GM10248 (cell line): ENCODE measurements at regions of chr4 and their contacts with region 1.

Region 1: GRCh38 chr4:108030332-108030731 is 40.6 kb downstream of the HADH start:
- DNase-seq: peak; percentile 76
- CTCF ChIP-seq: peak; percentile 84

Region 2: DNA sequence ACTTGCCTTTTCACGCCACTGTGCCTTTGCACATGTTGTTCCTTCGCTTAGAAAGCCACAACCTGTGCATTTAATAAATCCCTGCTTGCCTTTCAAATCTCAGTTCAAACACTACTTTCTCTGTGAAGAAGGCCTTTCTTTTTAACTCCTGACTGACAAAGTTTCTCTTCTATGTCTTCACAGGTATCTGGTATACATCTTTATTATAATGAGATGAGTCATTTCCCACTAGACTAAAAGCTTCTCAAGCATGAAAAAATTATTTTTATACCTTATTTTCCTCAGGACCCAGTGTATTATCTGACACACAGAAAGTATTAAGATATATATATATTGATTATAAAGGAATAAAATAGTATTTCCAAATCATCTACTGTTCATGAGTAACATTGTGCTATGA is 1904.3 kb before region 1 on chr4:
- CTCF ChIA-PET with region 1: no interaction called
- POLR2A ChIA-PET with region 1: no interaction called
- DNase-seq: no peak
- CTCF ChIP-seq: no peak

Region 3: GRCh38 chr4:108018040-108018883 is 12.1 kb before region 1 on chr4:
- CTCF ChIA-PET with region 1: interaction called, 157 read pairs
- POLR2A ChIA-PET with region 1: no interaction called
- DNase-seq: peak; percentile 74
- CTCF ChIP-seq: peak; percentile 88

Region 4: DNA sequence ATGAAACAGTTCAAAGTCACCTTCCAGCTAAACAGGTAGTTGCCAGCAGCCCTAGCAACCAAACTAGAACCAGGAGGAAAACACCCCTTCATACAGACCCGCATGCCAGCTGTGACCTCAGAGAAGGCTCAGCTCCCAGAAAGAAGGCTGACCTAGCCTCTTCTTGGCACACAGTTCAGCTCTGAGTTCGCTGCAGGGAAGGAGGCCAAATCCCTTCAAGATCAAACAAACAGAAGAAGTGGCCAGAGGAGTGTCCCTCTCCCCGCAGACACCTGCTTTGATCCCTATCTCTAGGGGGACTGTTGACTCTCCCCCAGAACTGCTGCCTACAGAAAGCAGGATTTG is 15.3 kb after region 1 on chr4:
- CTCF ChIA-PET with region 1: interaction called, 27 read pairs
- POLR2A ChIA-PET with region 1: no interaction called
- DNase-seq: no peak
- CTCF ChIP-seq: no peak

Region 5: GRCh38 chr4:108053251-108053711 is 22.9 kb after region 1 on chr4:
- CTCF ChIA-PET with region 1: interaction called, 27 read pairs
- POLR2A ChIA-PET with region 1: no interaction called
- DNase-seq: peak; percentile 70
- CTCF ChIP-seq: no peak

Region 6: GRCh38 chr4:108060164-108060563 is 29.8 kb after region 1 on chr4:
- CTCF ChIA-PET with region 1: interaction called, 10 read pairs
- POLR2A ChIA-PET with region 1: no interaction called
- DNase-seq: no peak
- CTCF ChIP-seq: peak; percentile 42

Region 7: GRCh38 chr4:108181704-108182103 is 151.4 kb after region 1 on chr4:
- CTCF ChIA-PET with region 1: interaction called, 63 read pairs
- POLR2A ChIA-PET with region 1: no interaction called
- DNase-seq: peak; percentile 31
- CTCF ChIP-seq: peak; percentile 44

Region 8: DNA sequence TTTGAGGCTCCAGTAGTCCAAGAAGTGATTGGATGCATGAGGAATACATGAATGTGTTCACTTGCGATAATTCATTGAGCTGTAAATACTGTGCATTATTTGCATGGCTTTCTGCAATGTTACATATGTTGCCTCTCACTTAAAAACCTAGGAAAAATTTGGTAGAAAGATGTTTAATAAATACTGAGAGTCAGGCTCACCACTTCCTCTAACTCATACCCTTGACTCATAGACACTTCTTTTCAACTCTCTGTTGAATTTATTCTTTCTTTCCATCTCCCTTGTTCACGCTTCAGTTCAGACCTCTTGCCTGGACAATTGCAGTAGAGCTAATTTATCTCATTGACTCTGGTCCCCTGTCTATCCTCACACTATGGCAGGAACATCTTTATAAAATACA is 174.2 kb after region 1 on chr4:
- CTCF ChIA-PET with region 1: no interaction called
- POLR2A ChIA-PET with region 1: no interaction called
- DNase-seq: no peak
- CTCF ChIP-seq: no peak